Astrocyte of the cerebellum (primary cell): ENCODE measurements at regions of chr11 and their contacts with region 1.

Region 1: GRCh38 chr11:118380571-118380970 is 20.8 kb upstream of the ATP5MG start:
- DNase-seq: no peak
- H3K4me3 ChIP-seq: no peak overlapping the region
- CTCF ChIP-seq: no peak

Region 2: DNA sequence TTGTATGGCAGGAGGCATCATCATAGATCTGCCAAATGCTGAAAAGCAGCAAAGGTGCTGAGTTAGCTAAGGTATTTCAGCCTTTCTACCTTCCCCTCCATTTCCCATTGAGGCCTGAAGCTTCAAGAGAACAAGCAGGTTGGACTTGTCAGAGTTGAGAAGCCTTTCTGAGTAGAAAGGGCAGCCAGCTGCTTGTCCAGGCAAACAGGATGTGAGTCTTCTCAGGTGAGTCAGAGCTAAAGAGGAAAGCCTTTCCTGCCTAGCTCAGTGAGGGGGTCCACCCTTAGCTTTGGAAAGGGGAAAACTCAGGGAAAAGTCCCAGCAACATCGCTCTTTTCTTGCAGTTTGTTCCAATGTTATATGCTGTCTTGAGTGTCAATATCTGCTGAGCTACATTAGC is 103.3 kb before region 1 on chr11:
- in situ Hi-C with region 1: no loop called
- DNase-seq: no peak
- H3K4me3 ChIP-seq: no peak overlapping the region
- CTCF ChIP-seq: no peak

Region 3: DNA sequence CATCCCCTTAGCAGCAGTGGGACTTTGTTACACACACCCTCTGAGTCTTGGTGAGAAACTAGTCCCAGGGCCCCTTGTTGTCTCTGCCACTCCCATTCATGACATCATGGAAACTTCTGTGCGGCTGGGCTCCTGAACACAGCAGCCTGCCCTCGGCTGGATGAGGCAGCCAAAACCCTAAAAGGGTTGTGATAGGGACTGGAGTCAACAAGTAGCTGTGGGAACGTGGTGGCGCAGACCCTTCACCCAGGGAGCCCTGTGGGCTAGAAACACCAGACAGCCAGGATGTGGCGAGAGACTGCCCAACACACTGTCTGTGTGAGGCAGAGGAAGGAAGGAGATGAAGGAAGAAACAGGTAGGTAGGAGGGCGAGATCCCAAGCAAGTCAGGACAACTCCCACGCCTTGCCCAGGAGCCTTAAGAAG is 41.9 kb before region 1 on chr11:
- in situ Hi-C with region 1: no loop called
- DNase-seq: no peak
- H3K4me3 ChIP-seq: no peak overlapping the region
- CTCF ChIP-seq: no peak

Region 4: DNA sequence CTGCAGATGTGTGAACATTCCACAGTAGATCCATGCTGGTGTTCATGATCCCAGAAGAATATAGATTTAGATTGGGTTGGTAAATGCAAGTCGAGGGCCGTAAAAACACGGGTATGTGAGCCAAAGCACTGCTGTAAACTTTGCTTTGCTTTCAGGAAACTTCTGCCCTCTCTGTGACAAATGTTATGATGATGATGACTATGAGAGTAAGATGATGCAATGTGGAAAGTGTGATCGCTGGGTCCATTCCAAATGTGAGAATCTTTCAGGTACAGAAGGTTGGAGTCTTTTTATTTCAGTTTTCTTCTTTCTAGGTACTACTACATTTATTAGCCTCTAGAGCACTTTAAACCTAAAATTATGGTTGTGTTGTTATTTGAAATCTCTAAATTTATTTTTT is 110.5 kb after region 1 on chr11:
- in situ Hi-C with region 1: loop called (anchors 5 kb)
- DNase-seq: no peak
- H3K4me3 ChIP-seq: no peak overlapping the region
- CTCF ChIP-seq: no peak

Region 5: GRCh38 chr11:118838905-118839553 is 458.5 kb after region 1 on chr11:
- in situ Hi-C with region 1: no loop called
- DNase-seq: no peak
- H3K4me3 ChIP-seq: no peak overlapping the region
- CTCF ChIP-seq: no peak